Activated CD4-positive, alpha-beta memory T cell treated with anti-CD3 and anti-CD28 coated beads, Interleukin-2, amount 10 ng/mL, durations not matched to agents 7 days and 5 days (primary cell): ENCODE measurements at regions of chr1 and their contacts with region 1.

Region 1: DNA sequence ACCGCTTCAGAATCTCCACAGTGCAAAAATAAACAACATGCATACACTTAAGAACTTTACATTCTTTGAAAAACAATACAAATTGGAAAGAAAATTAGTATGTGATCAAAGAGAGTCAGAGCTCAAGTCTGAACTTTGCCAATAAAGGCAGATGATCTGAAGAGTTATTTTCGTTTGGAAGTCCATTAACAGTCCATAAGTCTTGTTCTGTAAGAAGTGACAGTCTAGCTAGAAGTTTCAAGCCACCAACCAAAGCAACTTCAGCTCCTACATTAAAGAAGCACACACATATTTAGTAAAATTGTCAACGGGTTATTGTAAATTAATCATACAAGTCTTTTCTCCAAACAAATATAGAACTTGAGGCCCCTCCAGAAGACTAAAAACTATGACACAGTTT is 20.7 kb downstream of the ANGEL2 start:
- DNase-seq: no peak
- H3K4me3 Mint-ChIP-seq: no peak overlapping the region
- H3K27ac Mint-ChIP-seq: no peak overlapping the region
- H3K4me1 Mint-ChIP-seq: peaks cover 3% of the 10 kb centered on the region
- H3K27me3 Mint-ChIP-seq: no peaks in the 10 kb centered on the region

Region 2: DNA sequence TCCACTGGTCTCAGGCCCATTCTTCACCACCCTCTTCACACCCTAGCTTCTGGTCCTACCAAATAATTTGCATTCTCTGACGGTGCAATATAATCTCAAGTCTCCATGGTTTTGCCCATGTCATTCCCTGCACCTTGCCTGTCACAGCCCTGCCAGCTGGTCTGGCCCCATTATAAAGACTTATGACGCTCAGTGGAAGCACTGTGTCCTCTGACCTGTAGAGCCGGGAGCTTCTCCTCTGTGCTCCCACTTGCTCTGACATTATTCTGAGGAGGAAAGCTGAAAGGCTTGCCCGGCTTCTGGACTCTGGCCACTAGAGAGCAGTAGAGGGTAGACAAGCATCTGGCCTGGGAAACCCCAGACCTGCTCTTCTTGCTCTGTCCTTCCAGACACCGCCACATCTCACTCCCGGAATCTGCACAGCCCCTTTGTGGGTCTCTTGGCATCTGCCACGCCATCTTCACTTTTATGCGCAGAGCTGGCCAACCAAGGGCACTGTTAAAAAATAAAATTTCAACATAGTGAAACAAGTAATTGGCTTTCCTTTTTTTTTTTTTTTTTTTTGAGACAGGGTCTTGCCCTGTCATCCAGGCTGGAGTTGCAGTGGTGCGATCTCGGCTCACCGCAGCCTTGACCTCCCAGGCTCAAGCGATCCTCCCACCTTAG is 517.8 kb before region 1 on chr1:
- CTCF ChIA-PET with region 1: interaction called, 10 read pairs
- POLR2A ChIA-PET with region 1: no interaction called
- DNase-seq: peak; percentile 79
- H3K4me3 Mint-ChIP-seq: no peak overlapping the region
- H3K27ac Mint-ChIP-seq: no peak overlapping the region
- H3K4me1 Mint-ChIP-seq: peaks cover 19% of the 10 kb centered on the region
- H3K27me3 Mint-ChIP-seq: peaks cover 19% of the 10 kb centered on the region

Region 3: GRCh38 chr1:212814537-212815334 is 180.2 kb before region 1 on chr1:
- CTCF ChIA-PET with region 1: interaction called, 33 read pairs
- POLR2A ChIA-PET with region 1: no interaction called
- DNase-seq: no peak
- H3K4me3 Mint-ChIP-seq: no peak overlapping the region
- H3K27ac Mint-ChIP-seq: no peak overlapping the region
- H3K4me1 Mint-ChIP-seq: peaks cover 2% of the 10 kb centered on the region
- H3K27me3 Mint-ChIP-seq: no peaks in the 10 kb centered on the region

Region 4: GRCh38 chr1:212857992-212858460 is 136.9 kb before region 1 on chr1 and contains the start of gene FLVCR1:
- CTCF ChIA-PET with region 1: interaction called, 10 read pairs
- POLR2A ChIA-PET with region 1: no interaction called
- DNase-seq: peak; percentile 97
- H3K4me3 Mint-ChIP-seq: no peak within 1 kb of the TSS
- H3K27ac Mint-ChIP-seq: peak within 1 kb of the TSS; percentile 92
- H3K4me1 Mint-ChIP-seq: peaks cover 32% of the 10 kb centered on the region
- H3K27me3 Mint-ChIP-seq: no peaks in the 10 kb centered on the region
- total RNA-seq, gene FLVCR1: 11.7 to 14.2 TPM

Region 5: GRCh38 chr1:213099682-213100399 is 104.9 kb after region 1 on chr1:
- CTCF ChIA-PET with region 1: no interaction called
- POLR2A ChIA-PET with region 1: no interaction called
- DNase-seq: no peak
- H3K4me3 Mint-ChIP-seq: no peak overlapping the region
- H3K27ac Mint-ChIP-seq: no peak overlapping the region
- H3K4me1 Mint-ChIP-seq: no peaks in the 10 kb centered on the region
- H3K27me3 Mint-ChIP-seq: no peaks in the 10 kb centered on the region

Region 6: GRCh38 chr1:213110349-213111300 is 115.7 kb after region 1 on chr1:
- CTCF ChIA-PET with region 1: no interaction called
- POLR2A ChIA-PET with region 1: no interaction called
- DNase-seq: no peak
- H3K4me3 Mint-ChIP-seq: no peak overlapping the region
- H3K27ac Mint-ChIP-seq: no peak overlapping the region
- H3K4me1 Mint-ChIP-seq: peaks cover 9% of the 10 kb centered on the region
- H3K27me3 Mint-ChIP-seq: no peaks in the 10 kb centered on the region